ENCODE measurements at regions of chr5 and their contacts with region 1.

Region 1: DNA sequence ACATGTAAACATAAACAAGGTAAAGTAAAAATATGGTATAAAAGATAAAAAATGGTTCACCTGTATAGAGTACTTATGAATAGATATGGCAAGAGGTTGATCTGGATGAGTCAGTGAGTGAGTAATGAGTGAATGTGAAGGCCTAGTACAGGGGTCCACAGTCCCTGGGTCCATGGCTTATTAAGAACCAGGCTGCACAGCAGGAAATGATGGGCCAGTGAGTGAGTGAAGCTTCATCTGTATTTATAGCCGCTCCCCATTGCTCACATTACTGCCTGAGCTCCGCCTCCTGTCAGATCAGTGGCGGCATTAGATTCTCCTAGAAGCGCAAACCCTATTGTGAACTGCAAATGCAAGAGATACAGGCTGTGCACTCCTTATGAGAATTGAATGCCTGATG is 307.7 kb upstream of the ZNF608 start:
- DNase-seq: no peak
- H3K4me3 ChIP-seq: no peak overlapping the region
- H3K27ac ChIP-seq: no peak overlapping the region
- H3K4me1 ChIP-seq: peaks cover 14% of the 10 kb centered on the region
- CTCF ChIP-seq: no peak

Region 2: DNA sequence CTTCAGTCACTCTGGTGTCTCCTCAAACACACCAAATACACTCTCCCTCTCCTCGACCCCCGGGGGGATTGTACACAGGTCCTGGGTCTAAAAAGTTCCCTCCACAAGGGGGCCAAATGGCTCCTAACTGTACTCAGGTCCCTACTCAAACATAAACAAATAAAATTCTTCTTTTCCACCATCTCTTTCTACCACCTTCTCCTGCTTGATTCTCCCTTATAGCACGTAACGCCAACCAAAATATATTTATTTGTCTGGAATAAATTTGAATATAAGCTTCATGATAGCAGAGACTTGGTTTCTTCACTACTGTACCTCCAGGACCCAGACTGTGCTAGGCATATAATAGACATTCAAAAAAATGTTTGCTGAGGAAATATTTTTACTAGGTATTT is 329.1 kb before region 1 on chr5:
- CTCF ChIA-PET with region 1: no interaction called
- POLR2A ChIA-PET with region 1: no interaction called
- intact Hi-C with region 1: no loop called
- DNase-seq: peak; percentile 83
- H3K4me3 ChIP-seq: peak overlapping the region; percentile 71
- H3K27ac ChIP-seq: peak overlapping the region; percentile 65
- H3K4me1 ChIP-seq: peaks cover 86% of the 10 kb centered on the region
- CTCF ChIP-seq: peak; percentile 85

Region 3: GRCh38 chr5:125037020-125037419 is 17.1 kb before region 1 on chr5:
- CTCF ChIA-PET with region 1: no interaction called
- POLR2A ChIA-PET with region 1: interaction called, 10 read pairs
- intact Hi-C with region 1: no loop called
- DNase-seq: peak; percentile 60
- H3K4me3 ChIP-seq: peak overlapping the region; percentile 9
- H3K27ac ChIP-seq: peak overlapping the region; percentile 17
- H3K4me1 ChIP-seq: peaks cover 33% of the 10 kb centered on the region
- CTCF ChIP-seq: no peak

Measured in OCI-LY7 (cell line).